AG04450 (cell line): ENCODE measurements at regions of chr2 and their contacts with region 1.

Region 1: GRCh38 chr2:102806250-102806837 is 44.5 kb downstream of the TMEM182 start:
- DNase-seq: peak; percentile 27
- H3K4me3 ChIP-seq: no peak overlapping the region
- H3K27ac ChIP-seq: no peak overlapping the region
- H3K27me3 ChIP-seq: no peaks in the 10 kb centered on the region
- CTCF ChIP-seq: peak; percentile 90

Region 2: GRCh38 chr2:102473020-102473419 is 333.3 kb before region 1 on chr2 and contains the start of gene SLC9A4:
- CTCF ChIA-PET with region 1: interaction called, 14 read pairs
- POLR2A ChIA-PET with region 1: no interaction called
- DNase-seq: no peak
- H3K4me3 ChIP-seq: no peak within 1 kb of the TSS
- H3K27ac ChIP-seq: no peak within 1 kb of the TSS
- H3K27me3 ChIP-seq: peaks cover 22% of the 10 kb centered on the region
- CTCF ChIP-seq: peak; percentile 87
- polyA plus RNA-seq, gene SLC9A4: not detected in 2 replicates

Region 3: DNA sequence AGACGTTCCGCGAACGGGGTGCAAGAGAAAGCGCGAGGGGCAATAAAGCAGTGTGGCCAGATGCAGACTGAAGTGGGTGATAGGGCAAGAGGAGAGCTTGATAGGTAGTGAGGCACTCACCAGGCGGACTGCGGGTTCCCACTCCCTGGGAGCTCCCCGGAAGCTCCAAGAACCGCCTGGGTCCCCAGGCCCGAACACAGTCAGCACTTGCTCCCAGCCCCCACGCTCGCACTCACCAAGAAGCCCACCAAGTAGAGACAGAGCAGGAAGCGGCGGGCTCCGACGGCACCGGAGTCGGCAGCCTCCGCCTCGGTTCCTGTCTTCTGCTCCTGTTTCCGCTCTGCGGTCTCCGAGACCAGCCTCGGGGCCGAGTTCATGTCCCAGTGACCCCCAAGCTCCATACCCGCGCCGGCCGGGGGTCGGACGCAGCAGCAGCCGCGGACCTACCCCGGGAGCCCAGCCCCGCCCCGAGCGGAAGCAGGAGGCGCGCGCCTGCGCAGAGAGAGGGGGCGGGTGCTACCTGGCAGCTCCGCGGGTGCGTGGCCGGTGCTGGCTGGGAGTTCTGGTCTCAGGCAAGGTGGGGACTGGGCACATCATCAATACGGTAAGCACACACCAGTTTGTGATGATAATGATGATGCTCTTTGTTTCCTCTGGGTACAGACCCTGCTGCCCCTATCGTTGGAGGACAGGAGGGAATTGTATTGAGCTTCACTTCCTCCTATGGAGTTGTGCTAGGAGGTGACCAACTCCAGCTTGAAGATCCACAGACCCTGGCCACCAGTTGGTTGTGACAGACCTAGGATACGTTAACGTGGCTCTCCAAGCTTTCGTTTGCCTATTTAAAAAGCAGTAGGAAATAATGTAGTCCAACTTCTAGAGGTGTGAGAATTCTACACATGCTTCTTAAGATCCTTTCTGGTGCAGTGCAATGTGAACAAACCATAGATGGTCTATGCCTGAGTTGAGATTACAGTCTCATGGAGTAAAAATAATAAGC is 69.6 kb before region 1 on chr2:
- CTCF ChIA-PET with region 1: interaction called, 22 read pairs
- POLR2A ChIA-PET with region 1: no interaction called
- DNase-seq: no peak
- H3K4me3 ChIP-seq: peak overlapping the region; percentile 84
- H3K27ac ChIP-seq: no peak overlapping the region
- H3K27me3 ChIP-seq: no peaks in the 10 kb centered on the region
- CTCF ChIP-seq: peak; percentile 31; the same call in 1 of the 2 replicates

Region 4: GRCh38 chr2:102753563-102754159 is 52.7 kb before region 1 on chr2:
- CTCF ChIA-PET with region 1: interaction called, 189 read pairs
- POLR2A ChIA-PET with region 1: no interaction called
- DNase-seq: no peak
- H3K4me3 ChIP-seq: no peak overlapping the region
- H3K27ac ChIP-seq: no peak overlapping the region
- H3K27me3 ChIP-seq: no peaks in the 10 kb centered on the region
- CTCF ChIP-seq: peak; percentile 74

Region 5: GRCh38 chr2:102771114-102771513 is 35.2 kb before region 1 on chr2:
- CTCF ChIA-PET with region 1: interaction called, 13 read pairs
- POLR2A ChIA-PET with region 1: no interaction called
- DNase-seq: no peak
- H3K4me3 ChIP-seq: no peak overlapping the region
- H3K27ac ChIP-seq: no peak overlapping the region
- H3K27me3 ChIP-seq: no peaks in the 10 kb centered on the region
- CTCF ChIP-seq: no peak

Region 6: DNA sequence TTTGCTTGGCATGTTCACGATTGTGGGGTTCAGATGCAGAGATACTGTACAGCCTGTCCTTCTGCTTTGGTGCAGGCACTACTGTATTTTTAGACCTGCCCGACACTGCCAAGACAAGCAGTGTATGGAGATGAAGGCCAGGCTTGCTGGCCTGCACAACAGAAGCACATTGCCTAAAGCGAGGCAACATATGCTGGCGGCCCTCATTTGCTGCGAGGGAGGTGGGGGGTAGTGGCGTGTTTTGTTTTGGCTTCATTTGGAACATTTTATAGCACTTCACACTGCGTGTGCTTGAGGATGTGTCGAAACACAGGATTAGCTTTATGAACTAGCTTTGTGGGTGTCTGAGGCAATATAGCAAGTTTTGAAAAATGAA is 17.5 kb before region 1 on chr2:
- CTCF ChIA-PET with region 1: interaction called, 27 read pairs
- POLR2A ChIA-PET with region 1: no interaction called
- DNase-seq: no peak
- H3K4me3 ChIP-seq: no peak overlapping the region
- H3K27ac ChIP-seq: no peak overlapping the region
- H3K27me3 ChIP-seq: peaks cover 3% of the 10 kb centered on the region
- CTCF ChIP-seq: no peak